ENCODE measurements at regions of chr11 and their contacts with region 1.

Region 1: DNA sequence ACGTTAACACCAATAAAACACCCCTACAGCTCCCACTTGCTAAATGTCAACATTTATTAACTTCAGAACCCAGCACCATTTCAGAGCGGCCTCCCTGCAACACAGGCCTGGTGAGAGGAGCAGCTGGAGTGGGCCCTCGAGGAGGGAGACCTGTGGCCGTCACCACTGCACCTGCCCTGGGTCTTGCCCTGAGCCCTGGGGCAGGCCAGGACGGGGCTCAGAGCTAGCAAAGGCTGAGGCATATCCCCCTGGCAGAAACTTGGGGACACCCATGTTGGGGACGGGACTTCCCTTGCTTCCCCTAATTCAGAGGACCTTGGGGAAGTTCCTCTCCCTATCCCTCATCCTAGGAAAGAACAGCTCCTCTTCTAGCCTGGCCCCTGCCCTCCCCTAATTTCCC is 137.3 kb upstream of the THY1 start:
- DNase-seq: no peak
- ATAC-seq: no peak
- H3K4me3 ChIP-seq: no peak overlapping the region
- H3K27ac ChIP-seq: no peak overlapping the region
- H3K4me1 ChIP-seq: no peaks in the 10 kb centered on the region
- H3K27me3 ChIP-seq: 0 out of 2 replicates have a peak, but pooled peaks cover 3% of the 10 kb centered on the region
- CTCF ChIP-seq: no peak

Region 2: DNA sequence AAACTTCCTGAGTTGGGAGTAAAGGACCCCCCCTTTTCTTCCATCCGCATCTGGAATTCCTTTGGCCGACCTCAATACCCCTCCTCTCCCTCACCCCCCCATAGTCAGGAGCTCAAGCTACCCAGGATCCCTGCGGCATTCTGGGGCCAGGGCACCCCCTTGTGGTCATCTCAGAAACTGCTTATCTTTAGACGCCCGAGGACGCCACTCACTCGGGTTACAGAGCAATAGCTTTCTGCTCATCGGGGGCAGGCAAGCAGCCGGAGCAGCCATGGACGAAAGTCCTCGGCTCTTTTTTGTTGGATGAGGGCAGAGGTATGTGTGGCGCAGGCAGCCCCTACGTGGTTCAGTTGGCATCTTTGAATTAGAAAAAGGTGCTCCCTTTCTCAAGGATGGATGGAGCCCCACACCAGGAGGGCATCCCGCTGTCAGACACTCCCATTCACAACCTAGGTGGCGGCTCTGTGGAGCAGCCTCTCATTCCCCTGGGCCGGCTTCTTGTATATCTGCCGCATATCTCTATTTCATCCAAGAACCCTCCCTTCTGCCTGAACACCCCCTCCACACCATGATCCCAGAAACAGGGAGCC is 221.9 kb before region 1 on chr11:
- CTCF ChIA-PET with region 1: no interaction called
- POLR2A ChIA-PET with region 1: no interaction called
- in situ Hi-C with region 1: no loop called
- intact Hi-C with region 1: no loop called
- DNase-seq: peak; percentile 71
- ATAC-seq: peak; percentile 73
- H3K4me3 ChIP-seq: 0 out of 4 replicates have a peak overlapping the region, but pooled peaks of 1 of the 2 experiments have one; percentile 16
- H3K27ac ChIP-seq: peak overlapping the region; percentile 40; the same call in 1 of the 2 replicates
- H3K4me1 ChIP-seq: peaks cover 40% of the 10 kb centered on the region
- H3K27me3 ChIP-seq: no peaks in the 10 kb centered on the region
- CTCF ChIP-seq: peak; percentile 98

Region 3: GRCh38 chr11:119525180-119525866 is 35.0 kb before region 1 on chr11:
- CTCF ChIA-PET with region 1: no interaction called
- POLR2A ChIA-PET with region 1: interaction called, 11 read pairs
- in situ Hi-C with region 1: no loop called
- intact Hi-C with region 1: no loop called
- DNase-seq: no peak
- ATAC-seq: no peak
- H3K4me3 ChIP-seq: no peak overlapping the region
- H3K27ac ChIP-seq: no peak overlapping the region
- H3K4me1 ChIP-seq: no peaks in the 10 kb centered on the region
- H3K27me3 ChIP-seq: no peaks in the 10 kb centered on the region; the same call in 1 of the 2 replicates
- CTCF ChIP-seq: no peak

Region 4: GRCh38 chr11:119584193-119585037 is 24.1 kb after region 1 on chr11:
- CTCF ChIA-PET with region 1: no interaction called
- POLR2A ChIA-PET with region 1: interaction called, 18 read pairs
- in situ Hi-C with region 1: no loop called
- intact Hi-C with region 1: no loop called
- DNase-seq: no peak
- ATAC-seq: peak; percentile 75
- H3K4me3 ChIP-seq: peak overlapping the region; percentile 39 to 46
- H3K27ac ChIP-seq: no peak overlapping the region
- H3K4me1 ChIP-seq: peaks cover 7% of the 10 kb centered on the region; the same call in 1 of the 2 replicates
- H3K27me3 ChIP-seq: peaks cover 18% of the 10 kb centered on the region
- CTCF ChIP-seq: no peak